ENCODE measurements at regions of chr22 and their contacts with region 1.

Region 1: DNA sequence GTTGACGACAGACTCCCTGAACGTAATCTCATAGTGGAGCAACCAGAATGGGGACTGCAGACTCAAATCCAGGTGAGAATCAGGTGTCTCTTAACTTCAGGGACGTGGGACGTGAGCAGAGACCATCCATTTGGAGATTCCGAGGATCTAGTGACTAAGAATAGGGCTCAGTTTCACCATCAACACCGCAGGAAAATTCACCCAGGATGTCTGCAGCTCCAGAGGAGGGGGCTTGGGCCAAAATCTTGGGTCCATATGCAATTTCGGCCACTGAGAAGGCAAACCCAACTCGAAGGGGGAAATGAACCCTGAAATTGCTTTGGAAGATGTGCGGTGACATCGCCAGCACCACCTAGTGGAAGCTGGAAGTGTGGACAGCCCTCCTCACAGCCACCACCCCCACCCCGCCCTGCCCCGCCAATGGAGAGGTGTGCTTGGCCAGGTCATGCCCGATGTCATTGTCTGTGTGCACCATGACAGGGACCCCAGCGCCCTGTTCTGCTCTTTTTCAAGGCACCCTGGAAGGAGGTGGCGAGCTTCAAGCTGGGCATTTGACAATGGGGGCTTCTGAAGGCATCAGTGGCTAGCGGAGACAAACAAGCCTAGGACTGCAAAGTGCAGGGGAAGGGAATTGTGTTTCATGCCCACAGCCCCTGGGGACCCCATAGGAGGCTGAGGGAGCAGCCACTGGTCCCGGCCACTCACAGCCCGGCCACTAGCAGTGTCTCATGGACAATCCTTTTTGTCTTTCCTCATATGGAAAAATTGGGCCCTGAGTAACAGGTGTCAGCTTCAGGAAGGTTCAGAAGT is 24.8 kb downstream of the APOL1 start:
- DNase-seq: peak; percentile 84
- H3K4me3 ChIP-seq: no peak overlapping the region
- H3K27ac ChIP-seq: no peak overlapping the region
- H3K4me1 ChIP-seq: no peaks in the 10 kb centered on the region; a peak in 1 of 4 replicates
- H3K27me3 ChIP-seq: no peaks in the 10 kb centered on the region
- CTCF ChIP-seq: peak; percentile 70
- EP300 ChIP-seq: no peak
- RAD21 ChIP-seq: peak; percentile 74

Region 2: DNA sequence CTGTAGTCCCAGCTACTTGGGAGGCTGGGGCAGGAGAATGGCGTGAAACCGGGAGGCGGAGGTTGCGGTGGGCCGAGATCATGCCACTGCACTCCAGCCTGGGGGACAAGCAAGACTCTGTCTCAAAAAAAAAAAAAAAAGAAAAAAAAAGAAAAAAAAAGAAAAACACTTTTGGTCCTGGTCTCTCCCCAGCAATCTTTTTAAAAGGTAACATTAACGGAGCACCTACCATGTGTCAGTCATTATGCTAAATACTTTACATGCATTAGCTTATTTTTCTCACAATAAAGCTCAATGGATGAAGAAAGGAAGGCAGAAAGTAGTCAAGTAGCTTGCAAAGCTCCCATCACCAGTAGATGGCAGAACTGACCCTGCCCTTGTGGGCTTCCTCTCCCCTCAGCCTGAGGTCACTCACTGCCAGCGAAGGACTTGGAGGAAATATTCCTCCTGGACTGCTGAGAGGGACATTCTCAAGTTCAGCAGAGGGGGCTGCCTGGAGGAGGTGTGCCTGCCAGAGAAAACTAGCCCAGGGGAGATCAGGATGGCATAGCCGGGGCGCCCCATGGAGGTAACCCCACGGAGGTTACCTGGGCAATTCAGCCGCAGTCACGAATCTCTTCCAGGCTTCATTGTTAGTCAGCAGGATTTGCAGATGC is 132.7 kb before region 1 on chr22:
- CTCF ChIA-PET with region 1: interaction called, 16 read pairs
- POLR2A ChIA-PET with region 1: no interaction called
- DNase-seq: peak; percentile 57
- H3K4me3 ChIP-seq: no peak overlapping the region
- H3K27ac ChIP-seq: no peak overlapping the region
- H3K4me1 ChIP-seq: peaks cover 0 to 8% of the 10 kb centered on the region in 2 experiments; a peak in 1 of 4 replicates
- H3K27me3 ChIP-seq: no peaks in the 10 kb centered on the region
- CTCF ChIP-seq: peak; percentile 82
- EP300 ChIP-seq: no peak
- RAD21 ChIP-seq: peak; percentile 85

Region 3: DNA sequence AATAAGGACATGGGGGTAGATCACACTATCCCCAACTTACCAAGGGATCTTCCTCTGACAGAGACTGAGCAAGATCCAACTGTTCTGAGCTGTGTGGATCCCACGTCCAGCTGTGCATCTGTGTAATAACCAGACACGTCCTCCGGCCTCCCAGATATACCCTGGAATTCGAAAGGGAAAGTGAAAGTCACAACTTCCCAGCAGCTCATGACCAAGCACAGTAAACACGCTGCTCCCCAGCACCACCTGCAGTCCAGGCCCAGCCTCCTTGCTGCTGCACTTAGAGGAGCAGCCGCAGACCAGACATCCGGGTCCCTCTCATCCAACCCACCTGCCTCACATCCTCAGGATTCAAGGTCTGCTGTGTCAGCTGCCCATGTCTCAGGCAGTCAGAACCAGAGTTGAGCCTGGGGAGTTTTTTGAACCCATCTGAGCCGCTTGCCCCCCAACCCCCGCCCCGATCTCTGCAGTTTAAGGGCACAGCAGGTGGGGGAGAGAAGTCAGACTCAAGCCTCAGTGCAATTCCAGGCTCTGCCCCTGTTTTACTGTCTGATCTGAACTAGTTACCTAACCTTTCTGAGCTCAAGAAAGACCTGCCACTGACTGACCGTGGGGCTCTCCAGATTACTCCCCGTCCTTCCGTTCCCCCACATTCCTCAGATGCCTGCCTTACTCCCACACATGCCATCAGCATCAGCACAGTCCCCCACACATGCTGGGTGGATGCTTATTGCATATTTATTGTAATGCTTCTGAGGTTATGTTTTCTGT is 38.1 kb before region 1 on chr22 and contains the start of gene APOL2:
- CTCF ChIA-PET with region 1: interaction called, 18 read pairs
- POLR2A ChIA-PET with region 1: no interaction called
- DNase-seq: peak; percentile 85
- H3K4me3 ChIP-seq: peak within 1 kb of the TSS; percentile 61 to 79
- H3K27ac ChIP-seq: peak within 1 kb of the TSS; percentile 79 to 91
- H3K4me1 ChIP-seq: peaks cover 10 to 25% of the 10 kb centered on the region in 2 experiments; a peak in 1 of 4 replicates
- H3K27me3 ChIP-seq: no peaks in the 10 kb centered on the region
- CTCF ChIP-seq: peak; percentile 65
- EP300 ChIP-seq: no peak
- RAD21 ChIP-seq: peak; percentile 66
- polyA plus RNA-seq, gene APOL2: 8.3 and 9.4 TPM in 2 replicates

Region 4: DNA sequence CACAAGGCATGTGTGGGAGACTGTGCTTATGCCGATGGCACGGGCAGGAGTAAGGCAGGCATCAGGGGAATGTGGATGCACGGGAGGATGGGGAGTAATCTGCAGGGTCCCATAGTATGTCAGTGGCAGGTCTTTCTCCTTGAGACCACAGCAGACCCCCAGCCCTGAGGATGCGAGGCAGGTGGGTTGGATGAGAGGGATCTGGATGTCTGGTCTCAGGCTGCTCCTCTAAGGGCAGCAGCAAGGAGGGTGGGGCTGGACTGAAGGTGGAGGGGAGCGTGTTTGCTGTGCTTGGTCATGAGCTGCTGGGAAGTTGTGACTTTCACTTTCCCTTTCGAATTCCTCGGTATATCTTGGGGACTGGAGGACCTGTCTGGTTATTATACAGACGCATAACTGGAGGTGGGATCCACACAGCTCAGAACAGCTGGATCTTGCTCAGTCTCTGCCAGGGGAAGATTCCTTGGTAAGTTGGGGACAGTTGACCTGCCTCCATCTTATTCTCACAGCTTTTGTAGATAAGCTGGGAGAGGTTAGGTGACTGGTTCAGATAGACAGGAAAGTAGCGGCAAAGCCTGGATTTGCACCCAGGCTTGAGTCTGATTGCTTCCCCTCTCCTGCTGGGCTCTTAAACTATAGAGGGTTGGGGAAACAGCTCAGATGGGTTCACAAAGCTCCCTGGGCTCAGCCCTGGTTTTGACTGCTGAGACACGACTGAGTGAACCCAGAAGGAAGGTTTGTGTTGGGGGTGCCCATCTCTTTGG is 24.8 kb before region 1 on chr22 and contains the start of gene APOL1:
- CTCF ChIA-PET with region 1: interaction called, 14 read pairs
- POLR2A ChIA-PET with region 1: no interaction called
- DNase-seq: no peak
- H3K4me3 ChIP-seq: no peak within 1 kb of the TSS
- H3K27ac ChIP-seq: no peak within 1 kb of the TSS
- H3K4me1 ChIP-seq: peaks cover 0 to 23% of the 10 kb centered on the region in 2 experiments; a peak in 1 of 4 replicates
- H3K27me3 ChIP-seq: no peaks in the 10 kb centered on the region
- CTCF ChIP-seq: no peak
- EP300 ChIP-seq: no peak
- RAD21 ChIP-seq: no peak
- polyA plus RNA-seq, gene APOL1: 0.42 and 0.56 TPM in 2 replicates

Measured in SK-N-SH (cell line).